K562 (cell line): ENCODE measurements at regions of chr1 and their contacts with region 1.

Region 1: GRCh38 chr1:20212685-20213331 is 26.5 kb upstream of the PLA2G2C start:
- DNase-seq: peak; percentile 75 to 79 (median 77)
- ATAC-seq: peak; percentile 87
- H3K4me3 ChIP-seq: no peak overlapping the region
- H3K27ac ChIP-seq: no peak overlapping the region; the same call in 2 of the 3 replicates
- H3K4me1 ChIP-seq: peaks cover 21 to 23% of the 10 kb centered on the region in 2 experiments
- H3K27me3 ChIP-seq: peaks cover 0 to 14% of the 10 kb centered on the region in 2 experiments; a peak in 3 of 5 replicates
- CTCF ChIP-seq: peak; percentile 86 to 93 (median 90)
- EP300 ChIP-seq: no peak
- POLR2A ChIP-seq: no peak
- RAD21 ChIP-seq: peak; percentile 59 to 64

Region 2: GRCh38 chr1:20029178-20029912 is 183.5 kb before region 1 on chr1:
- CTCF ChIA-PET with region 1: no interaction called
- POLR2A ChIA-PET with region 1: no interaction called
- in situ Hi-C with region 1: no loop called
- intact Hi-C with region 1: no loop called
- DNase-seq: peak in 1 of 4 experiments; percentile 12
- ATAC-seq: no peak; the same call in 2 of the 3 replicates
- H3K4me3 ChIP-seq: no peak overlapping the region
- H3K27ac ChIP-seq: no peak overlapping the region
- H3K4me1 ChIP-seq: peaks cover 0 to 4% of the 10 kb centered on the region in 2 experiments; a peak in 2 of 5 replicates
- H3K27me3 ChIP-seq: peaks cover 9 to 25% of the 10 kb centered on the region in 2 experiments; a peak in 4 of 5 replicates
- CTCF ChIP-seq: no peak
- EP300 ChIP-seq: no peak
- POLR2A ChIP-seq: no peak
- RAD21 ChIP-seq: no peak

Region 3: GRCh38 chr1:20302093-20302471 is 89.3 kb after region 1 on chr1:
- CTCF ChIA-PET with region 1: no interaction called
- POLR2A ChIA-PET with region 1: no interaction called
- in situ Hi-C with region 1: no loop called
- intact Hi-C with region 1: loop called (anchors 10 kb)
- DNase-seq: no peak
- ATAC-seq: no peak
- H3K4me3 ChIP-seq: no peak overlapping the region
- H3K27ac ChIP-seq: no peak overlapping the region
- H3K4me1 ChIP-seq: no peaks in the 10 kb centered on the region
- H3K27me3 ChIP-seq: peaks cover 14 to 70% of the 10 kb centered on the region in 2 experiments; a peak in 4 of 5 replicates
- CTCF ChIP-seq: no peak
- EP300 ChIP-seq: no peak
- POLR2A ChIP-seq: no peak
- RAD21 ChIP-seq: no peak

Region 4: DNA sequence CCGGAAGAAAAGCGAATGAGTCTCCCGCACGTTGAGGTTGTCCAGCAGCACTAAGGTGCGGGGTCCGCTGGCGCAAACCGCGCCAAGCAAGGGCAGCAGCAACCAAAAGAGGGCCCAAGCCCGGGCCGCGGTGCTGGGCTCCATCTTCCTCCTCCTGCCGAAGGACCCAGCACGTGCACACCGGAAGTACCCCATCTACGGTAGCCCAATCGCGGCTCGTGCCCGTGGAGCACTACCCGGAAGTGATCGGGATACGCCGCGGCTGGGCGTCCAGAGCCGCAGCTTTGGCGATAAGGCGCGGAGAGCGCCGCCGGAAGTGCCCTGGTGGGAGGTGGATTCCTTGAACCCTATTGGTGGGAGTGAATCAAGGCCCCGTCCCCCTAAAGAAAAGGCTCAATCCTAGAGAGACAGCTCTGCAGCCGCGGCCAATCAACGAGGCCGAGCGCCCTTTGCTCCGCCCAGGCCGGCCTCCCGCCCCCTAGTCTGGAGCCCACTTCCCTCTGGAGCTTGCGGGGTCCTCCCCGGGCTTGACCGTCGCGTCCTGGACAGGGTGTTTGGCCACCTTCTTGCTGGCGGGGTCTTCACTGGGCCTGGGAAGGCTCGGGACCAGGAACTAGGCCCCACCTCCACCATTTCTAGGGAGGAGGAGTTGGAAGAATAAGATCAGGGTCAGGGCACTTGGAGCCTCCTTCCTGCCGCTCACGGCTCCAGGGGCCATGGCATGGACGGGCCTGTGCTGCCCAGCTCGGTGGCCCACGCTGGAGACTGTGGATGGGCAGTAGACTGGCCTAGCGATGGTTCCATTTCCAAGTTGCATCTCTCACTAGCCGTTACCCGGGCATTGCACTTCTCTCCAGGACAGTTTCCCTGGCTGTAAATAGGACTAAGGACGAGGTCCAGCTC is 448.6 kb after region 1 on chr1 and contains the start of gene DDOST:
- CTCF ChIA-PET with region 1: no interaction called
- POLR2A ChIA-PET with region 1: no interaction called
- in situ Hi-C with region 1: no loop called
- intact Hi-C with region 1: no loop called
- DNase-seq: peak; percentile 99 to 100 (median 100)
- ATAC-seq: peak; percentile 98
- H3K4me3 ChIP-seq: peak within 1 kb of the TSS; percentile 84
- H3K27ac ChIP-seq: peak within 1 kb of the TSS; percentile 80
- H3K4me1 ChIP-seq: peaks cover 15 to 31% of the 10 kb centered on the region in 2 experiments; a peak in 3 of 5 replicates
- H3K27me3 ChIP-seq: no peaks in the 10 kb centered on the region
- CTCF ChIP-seq: peak; percentile 67 to 77 (median 69)
- EP300 ChIP-seq: peak; percentile 46
- POLR2A ChIP-seq: peak; percentile 94
- RAD21 ChIP-seq: no peak
- polyA plus RNA-seq, gene DDOST: 185 to 306 TPM